ENCODE measurements at regions of chr1 and their contacts with region 1.

Region 1: DNA sequence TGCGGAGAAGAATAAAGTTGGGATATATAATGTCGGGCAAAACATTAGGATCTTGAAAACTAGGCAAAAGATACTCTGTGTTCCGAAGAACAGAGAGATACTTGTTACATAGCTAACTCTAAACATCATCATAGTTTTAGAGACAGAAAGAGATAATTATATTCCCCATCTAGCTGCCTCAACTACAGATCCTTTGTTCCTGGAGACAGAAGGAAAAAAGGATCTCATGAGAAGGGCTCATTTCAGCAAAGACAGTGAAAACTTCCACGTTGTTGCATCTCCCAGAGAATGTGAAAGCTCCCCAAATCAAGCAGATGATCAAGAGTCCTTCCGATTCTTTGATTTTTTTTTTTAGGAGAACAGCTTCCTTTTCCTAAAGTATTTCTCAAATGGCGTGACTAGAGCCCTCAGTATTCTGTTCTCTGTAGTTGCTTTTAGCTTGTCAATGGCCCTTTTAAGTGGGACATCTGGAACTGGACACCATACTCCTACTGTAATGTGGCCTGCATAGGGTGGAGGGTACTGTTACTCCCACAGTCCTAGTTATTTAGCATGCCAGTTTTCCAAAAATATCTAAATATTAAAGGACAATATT is 1048.2 kb downstream of the TTLL7 start:
- DNase-seq: no peak
- H3K4me3 ChIP-seq: no peak overlapping the region
- CTCF ChIP-seq: no peak

Region 2: GRCh38 chr1:82752046-82752445 is 198.7 kb before region 1 on chr1:
- in situ Hi-C with region 1: no loop called
- DNase-seq: no peak
- H3K4me3 ChIP-seq: no peak overlapping the region
- CTCF ChIP-seq: no peak

Region 3: GRCh38 chr1:83060221-83060620 is 109.5 kb after region 1 on chr1:
- in situ Hi-C with region 1: loop called (anchors 25 kb)
- DNase-seq: no peak
- H3K4me3 ChIP-seq: no peak overlapping the region
- CTCF ChIP-seq: no peak